CD4-positive, alpha-beta memory T cell (primary cell): ENCODE measurements at regions of chr1 and their contacts with region 1.

Region 1: GRCh38 chr1:93021539-93022134 is 57.4 kb upstream of the MTF2 start:
- DNase-seq: peak in 4 of 5 donors; percentile 59 to 63 (median 60)
- H3K4me3 ChIP-seq: no peak overlapping the region
- H3K4me3 Mint-ChIP-seq: no peak overlapping the region
- H3K27ac ChIP-seq: no peak overlapping the region
- H3K27ac Mint-ChIP-seq: no peak overlapping the region
- H3K4me1 ChIP-seq: no peaks in the 10 kb centered on the region
- H3K4me1 Mint-ChIP-seq: peaks cover 0 to 3% (median 2%) of the 10 kb centered on the region in 4 donors
- H3K27me3 ChIP-seq: no peaks in the 10 kb centered on the region
- H3K27me3 Mint-ChIP-seq: peaks cover 3 to 9% of the 10 kb centered on the region in 2 donors

Region 2: DNA sequence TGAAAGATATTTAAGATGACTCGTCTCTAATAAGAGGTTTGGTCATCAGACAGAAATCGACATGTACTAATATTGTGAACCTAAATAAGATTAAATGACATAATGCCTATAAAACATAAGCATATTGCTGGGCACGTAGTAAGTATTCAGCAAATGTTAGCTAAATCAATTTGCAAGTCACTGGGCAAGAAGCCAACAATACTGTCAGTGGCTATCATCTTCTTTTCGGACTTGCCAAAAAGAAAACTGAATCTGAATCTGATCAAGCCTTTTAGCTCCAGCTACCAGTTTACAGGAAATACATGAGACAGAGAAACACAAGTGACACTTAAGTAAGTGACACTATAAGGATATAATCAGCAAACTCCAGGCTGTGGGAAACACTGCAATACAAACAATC is 143.8 kb before region 1 on chr1:
- CTCF ChIA-PET with region 1: no interaction called
- POLR2A ChIA-PET with region 1: no interaction called
- intact Hi-C with region 1: no loop called
- DNase-seq: no peak
- H3K4me3 ChIP-seq: no peak overlapping the region
- H3K4me3 Mint-ChIP-seq: peak overlapping the region in 7 of 8 donors; percentile 3 to 83 (median 63)
- H3K27ac ChIP-seq: no peak overlapping the region
- H3K27ac Mint-ChIP-seq: peak overlapping the region; percentile 9 to 93 (median 52)
- H3K4me1 ChIP-seq: peaks cover 42% of the 10 kb centered on the region
- H3K4me1 Mint-ChIP-seq: peaks cover 22 to 32% (median 28%) of the 10 kb centered on the region in 4 donors
- H3K27me3 ChIP-seq: no peaks in the 10 kb centered on the region
- H3K27me3 Mint-ChIP-seq: no peaks in the 10 kb centered on the region

Region 3: GRCh38 chr1:92909321-92909720 is 112.3 kb before region 1 on chr1:
- CTCF ChIA-PET with region 1: no interaction called
- POLR2A ChIA-PET with region 1: no interaction called
- intact Hi-C with region 1: no loop called
- DNase-seq: no peak
- H3K4me3 ChIP-seq: no peak overlapping the region
- H3K4me3 Mint-ChIP-seq: no peak overlapping the region
- H3K27ac ChIP-seq: no peak overlapping the region
- H3K27ac Mint-ChIP-seq: peak overlapping the region in 1 of 7 donors; percentile 18
- H3K4me1 ChIP-seq: peaks cover 5% of the 10 kb centered on the region
- H3K4me1 Mint-ChIP-seq: peaks cover 30 to 39% (median 36%) of the 10 kb centered on the region in 4 donors
- H3K27me3 ChIP-seq: no peaks in the 10 kb centered on the region
- H3K27me3 Mint-ChIP-seq: no peaks in the 10 kb centered on the region

Region 4: DNA sequence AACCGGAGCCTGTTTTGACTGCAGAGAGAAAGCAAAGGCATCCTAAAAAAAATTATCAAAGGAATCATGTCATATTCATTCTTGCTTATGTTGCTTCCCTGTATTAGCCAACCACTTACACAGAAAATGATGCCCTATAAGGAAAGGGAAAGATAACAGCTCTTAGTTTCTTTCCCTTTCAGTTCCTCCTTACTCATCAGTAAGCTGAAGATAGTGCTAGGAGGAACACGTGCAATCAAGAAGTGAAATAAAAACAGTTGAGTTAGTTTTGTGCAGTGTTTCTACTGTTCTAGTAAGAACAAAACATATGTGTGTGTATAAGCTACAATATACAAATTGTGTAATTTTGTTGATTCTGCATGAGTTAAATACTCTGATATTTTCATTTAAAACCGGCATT is 12.1 kb after region 1 on chr1:
- CTCF ChIA-PET with region 1: interaction called, 10 read pairs
- POLR2A ChIA-PET with region 1: no interaction called
- intact Hi-C with region 1: no loop called
- DNase-seq: no peak
- H3K4me3 ChIP-seq: no peak overlapping the region
- H3K4me3 Mint-ChIP-seq: no peak overlapping the region
- H3K27ac ChIP-seq: no peak overlapping the region
- H3K27ac Mint-ChIP-seq: no peak overlapping the region
- H3K4me1 ChIP-seq: peaks cover 17% of the 10 kb centered on the region
- H3K4me1 Mint-ChIP-seq: peaks cover 9 to 17% (median 11%) of the 10 kb centered on the region in 4 donors
- H3K27me3 ChIP-seq: no peaks in the 10 kb centered on the region
- H3K27me3 Mint-ChIP-seq: no peaks in the 10 kb centered on the region